IMR-90 (cell line): ENCODE measurements at regions of chr12 and their contacts with region 1.

Region 1: GRCh38 chr12:3299929-3300832 is 190.8 kb upstream of the PRMT8 start:
- DNase-seq: peak; percentile 96
- ATAC-seq: peak; percentile 79
- H3K4me3 ChIP-seq: no peak overlapping the region
- H3K27ac ChIP-seq: peak overlapping the region; percentile 36; the same call in 1 of the 2 replicates
- H3K4me1 ChIP-seq: peaks cover 9% of the 10 kb centered on the region
- H3K27me3 ChIP-seq: no peaks in the 10 kb centered on the region; the same call in 1 of the 2 replicates
- CTCF ChIP-seq: peak; percentile 92
- POLR2A ChIP-seq: peak; percentile 41; the same call in 1 of the 2 replicates
- RAD21 ChIP-seq: peak; percentile 92

Region 2: DNA sequence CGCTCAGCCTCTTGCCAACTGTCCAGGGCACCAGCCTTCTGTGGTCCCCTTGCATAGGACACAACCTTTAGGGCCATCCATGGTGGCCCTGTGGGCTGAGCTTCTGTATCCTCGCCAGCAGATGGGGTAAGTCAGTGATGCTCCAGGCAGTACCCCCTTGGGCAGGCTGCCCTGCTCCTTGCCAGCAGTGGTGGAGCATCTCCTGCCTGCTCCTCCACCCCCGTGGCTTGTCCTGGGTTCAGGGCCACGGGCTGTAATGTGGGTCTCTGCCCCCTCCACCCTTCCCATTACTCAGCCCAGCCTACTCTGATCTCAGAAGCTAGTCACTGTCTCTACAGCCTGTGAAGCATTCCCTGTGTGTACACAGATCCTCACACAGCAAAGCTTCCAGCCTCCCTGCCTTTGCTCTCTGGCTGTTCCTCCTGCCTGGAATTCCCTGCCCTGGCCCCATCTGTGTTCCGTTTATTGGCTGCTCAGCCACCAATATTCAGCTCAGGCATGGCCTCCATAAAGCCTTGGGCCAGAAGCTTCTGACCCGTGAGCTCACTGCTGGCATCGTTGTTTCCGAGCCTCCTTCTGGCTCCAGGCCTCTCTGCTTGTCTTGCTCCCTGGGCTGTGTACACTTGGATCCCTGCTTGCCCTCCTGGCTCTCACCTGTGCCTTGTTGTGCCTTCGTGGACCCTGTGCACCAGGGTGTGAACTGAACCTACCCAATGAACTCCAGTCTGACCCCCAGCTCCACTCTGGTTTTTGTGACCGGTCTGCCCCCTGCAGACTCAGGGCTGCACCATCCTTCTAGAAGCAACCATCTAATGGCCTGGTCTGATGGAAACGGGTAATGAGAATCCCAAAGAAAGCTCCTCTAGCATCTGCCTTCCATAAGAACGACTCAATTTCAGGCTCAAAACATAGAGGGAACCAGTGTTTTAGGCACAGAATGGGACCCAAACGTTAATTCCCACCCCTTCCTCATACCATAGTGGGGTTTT is 13.8 kb after region 1 on chr12:
- CTCF ChIA-PET with region 1: interaction called, 25 read pairs
- POLR2A ChIA-PET with region 1: no interaction called
- dilution Hi-C with region 1: no loop called
- in situ Hi-C with region 1: no loop called
- intact Hi-C with region 1: no loop called
- DNase-seq: peak; percentile 20
- ATAC-seq: peak; percentile 55; the same call in 1 of the 2 replicates
- H3K4me3 ChIP-seq: no peak overlapping the region
- H3K27ac ChIP-seq: no peak overlapping the region
- H3K4me1 ChIP-seq: peaks cover 6% of the 10 kb centered on the region; the same call in 1 of the 2 replicates
- H3K27me3 ChIP-seq: peaks cover 37% of the 10 kb centered on the region
- CTCF ChIP-seq: 0 out of 2 replicates have a peak, but pooled peaks have one; percentile 20
- POLR2A ChIP-seq: no peak
- RAD21 ChIP-seq: peak; percentile 4; the same call in 1 of the 2 replicates

Region 3: DNA sequence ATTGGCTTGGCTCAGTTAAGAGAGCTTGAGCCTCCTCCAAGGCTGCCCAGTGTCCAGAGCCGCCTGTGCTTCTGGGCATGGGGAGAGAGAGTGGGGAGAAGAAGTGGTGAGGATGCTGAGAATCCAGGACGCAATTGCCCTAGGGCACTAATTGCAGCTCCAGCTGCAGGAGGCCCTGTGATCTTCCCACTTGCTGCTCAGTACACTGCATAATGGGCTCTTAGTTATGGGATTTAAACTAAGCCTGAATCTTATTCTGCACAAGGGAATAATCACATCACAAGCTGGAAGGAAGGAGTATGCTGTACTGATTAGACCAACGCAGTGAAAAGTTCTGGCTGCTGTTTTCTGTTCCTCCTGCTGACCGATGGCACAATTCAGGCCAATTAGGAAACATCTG is 89.8 kb after region 1 on chr12:
- CTCF ChIA-PET with region 1: no interaction called
- POLR2A ChIA-PET with region 1: no interaction called
- dilution Hi-C with region 1: no loop called
- in situ Hi-C with region 1: no loop called
- intact Hi-C with region 1: no loop called
- DNase-seq: no peak
- ATAC-seq: no peak
- H3K4me3 ChIP-seq: no peak overlapping the region
- H3K27ac ChIP-seq: no peak overlapping the region
- H3K4me1 ChIP-seq: no peaks in the 10 kb centered on the region
- H3K27me3 ChIP-seq: no peaks in the 10 kb centered on the region; the same call in 1 of the 2 replicates
- CTCF ChIP-seq: no peak
- POLR2A ChIP-seq: no peak
- RAD21 ChIP-seq: no peak

Region 4: DNA sequence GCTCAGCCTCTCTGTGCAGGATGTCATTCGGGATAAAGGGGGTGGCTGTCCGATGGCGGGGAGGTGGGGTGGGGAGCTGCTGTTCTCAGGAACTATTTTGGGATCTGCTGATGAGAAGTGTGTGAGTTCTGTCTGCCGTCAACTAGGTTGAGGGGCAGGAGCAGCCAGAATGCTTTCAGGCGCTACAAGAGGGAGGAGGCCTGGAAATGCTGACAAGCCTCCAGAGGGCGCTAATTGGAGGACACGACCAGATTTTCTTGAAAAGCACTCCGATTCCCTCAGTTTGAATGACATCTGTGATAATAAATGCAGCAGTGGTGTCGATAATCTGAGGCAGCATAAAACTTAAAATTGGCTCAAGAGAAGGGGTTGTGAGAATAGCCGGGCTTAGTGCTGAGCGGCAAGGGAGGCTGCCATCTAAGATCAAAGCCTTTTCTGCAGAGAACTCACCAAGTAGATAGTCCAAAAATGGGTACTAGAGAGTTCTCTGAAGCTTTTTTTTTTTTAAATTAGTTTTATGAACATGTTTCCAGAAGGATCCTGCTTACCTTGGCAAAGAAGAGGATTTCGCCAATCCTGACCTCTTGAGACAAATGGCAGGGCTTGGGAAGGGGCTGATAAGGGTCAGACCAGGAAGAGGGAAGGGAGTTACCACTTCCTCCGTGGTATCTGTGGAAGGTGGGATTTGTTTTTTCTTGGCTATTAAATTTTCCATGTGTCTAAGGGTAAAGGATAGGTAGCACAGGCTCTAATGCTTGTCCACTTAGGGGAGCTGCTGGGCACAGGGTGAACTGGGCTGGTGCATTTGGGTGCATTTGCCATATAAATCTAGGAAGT is 358.4 kb after region 1 on chr12:
- CTCF ChIA-PET with region 1: interaction called, 3 read pairs
- POLR2A ChIA-PET with region 1: no interaction called
- dilution Hi-C with region 1: no loop called
- in situ Hi-C with region 1: no loop called
- intact Hi-C with region 1: loop called (anchors 5 kb)
- DNase-seq: peak; percentile 29
- ATAC-seq: peak; percentile 35; the same call in 1 of the 2 replicates
- H3K4me3 ChIP-seq: no peak overlapping the region
- H3K27ac ChIP-seq: no peak overlapping the region
- H3K4me1 ChIP-seq: no peaks in the 10 kb centered on the region
- H3K27me3 ChIP-seq: peaks cover 28% of the 10 kb centered on the region
- CTCF ChIP-seq: peak; percentile 53
- POLR2A ChIP-seq: no peak
- RAD21 ChIP-seq: peak; percentile 53

Region 5: GRCh38 chr12:3777206-3777809 is 477.1 kb after region 1 on chr12:
- CTCF ChIA-PET with region 1: interaction called, 15 read pairs
- POLR2A ChIA-PET with region 1: no interaction called
- dilution Hi-C with region 1: no loop called
- in situ Hi-C with region 1: no loop called
- intact Hi-C with region 1: loop called (anchors 1 kb)
- DNase-seq: peak; percentile 43
- ATAC-seq: peak; percentile 80
- H3K4me3 ChIP-seq: no peak overlapping the region
- H3K27ac ChIP-seq: no peak overlapping the region
- H3K4me1 ChIP-seq: no peaks in the 10 kb centered on the region
- H3K27me3 ChIP-seq: peaks cover 9% of the 10 kb centered on the region
- CTCF ChIP-seq: peak; percentile 74
- POLR2A ChIP-seq: 0 out of 2 replicates have a peak, but pooled peaks have one; percentile 31
- RAD21 ChIP-seq: peak; percentile 79

Region 6: DNA sequence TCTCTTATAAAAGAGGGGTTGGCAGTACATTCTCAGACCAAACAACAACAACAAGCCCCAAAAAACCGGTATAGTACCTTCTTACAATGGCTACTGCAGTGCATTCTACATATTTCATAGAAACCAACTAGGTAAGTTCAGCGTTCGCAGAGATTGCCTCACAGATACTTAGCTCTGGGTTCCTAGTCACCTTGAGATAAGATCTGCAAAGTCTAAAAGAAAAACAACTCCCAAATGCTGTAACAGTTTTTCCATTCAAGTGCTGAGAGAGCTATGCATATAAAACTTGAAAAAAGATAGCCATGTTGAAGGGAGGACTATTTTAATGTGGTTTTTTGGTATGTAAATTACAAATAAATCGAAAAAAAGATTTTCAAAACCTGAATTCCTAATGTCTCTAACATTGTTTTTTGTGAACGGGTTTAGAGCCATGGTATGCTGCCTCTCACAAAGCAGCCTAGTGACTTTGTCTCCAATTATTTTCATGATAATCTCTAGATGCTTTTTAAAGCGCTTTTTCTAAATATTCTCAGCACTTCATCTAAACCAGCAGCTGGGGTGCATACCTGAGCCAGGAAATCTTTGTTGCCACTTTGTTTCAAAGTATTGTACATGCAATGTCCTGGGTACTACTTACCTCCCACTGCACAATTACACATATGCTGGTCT is 509.3 kb after region 1 on chr12:
- CTCF ChIA-PET with region 1: interaction called, 22 read pairs
- POLR2A ChIA-PET with region 1: no interaction called
- dilution Hi-C with region 1: no loop called
- in situ Hi-C with region 1: loop called (anchors 10 kb)
- intact Hi-C with region 1: loop called (anchors 1 kb)
- DNase-seq: no peak
- ATAC-seq: no peak
- H3K4me3 ChIP-seq: no peak overlapping the region
- H3K27ac ChIP-seq: no peak overlapping the region
- H3K4me1 ChIP-seq: no peaks in the 10 kb centered on the region
- H3K27me3 ChIP-seq: no peaks in the 10 kb centered on the region
- CTCF ChIP-seq: no peak
- POLR2A ChIP-seq: no peak
- RAD21 ChIP-seq: no peak

Region 7: GRCh38 chr12:4037747-4038312 is 737.6 kb after region 1 on chr12:
- CTCF ChIA-PET with region 1: no interaction called
- POLR2A ChIA-PET with region 1: no interaction called
- dilution Hi-C with region 1: no loop called
- in situ Hi-C with region 1: no loop called
- intact Hi-C with region 1: loop called (anchors 5 kb)
- DNase-seq: peak; percentile 44
- ATAC-seq: peak; percentile 59
- H3K4me3 ChIP-seq: no peak overlapping the region
- H3K27ac ChIP-seq: no peak overlapping the region
- H3K4me1 ChIP-seq: peaks cover 2% of the 10 kb centered on the region; the same call in 1 of the 2 replicates
- H3K27me3 ChIP-seq: peaks cover 27% of the 10 kb centered on the region
- CTCF ChIP-seq: peak; percentile 79
- POLR2A ChIP-seq: no peak
- RAD21 ChIP-seq: peak; percentile 63